Posterior vena cava (tissue), 2 donors: ENCODE measurements at regions of chr9 and their contacts with region 1.

Region 1: DNA sequence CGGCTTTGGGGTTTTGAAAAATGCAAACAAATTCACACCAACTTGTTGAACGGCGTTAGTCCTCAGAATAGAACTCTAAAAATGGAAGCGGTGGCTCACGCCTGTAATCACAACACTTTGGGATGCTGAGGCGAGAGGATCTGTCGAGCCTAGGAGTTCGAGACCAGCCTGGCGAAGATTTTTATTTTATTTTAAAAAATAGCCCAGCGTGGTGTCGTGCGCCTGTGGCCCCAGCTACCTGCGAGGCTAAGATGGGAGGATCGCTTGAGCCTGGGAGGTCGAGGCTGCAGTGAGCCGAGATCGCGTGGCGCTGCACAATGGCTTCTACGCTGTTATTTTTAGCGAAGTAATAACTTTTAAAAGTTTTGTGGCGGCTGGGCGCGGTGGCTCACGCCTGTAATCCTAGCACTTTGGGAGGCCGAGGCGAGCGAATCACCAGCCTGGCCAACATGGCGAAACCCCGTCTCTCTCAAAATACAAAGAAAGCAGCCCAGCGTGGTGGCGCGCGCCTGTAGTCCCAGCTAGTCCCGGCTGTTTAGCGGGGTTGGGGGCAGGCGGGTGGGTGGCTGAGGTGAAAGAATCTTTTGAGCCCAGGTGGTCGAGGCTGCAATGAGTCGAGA is 699 bp upstream of the PLIN2 start:
- DNase-seq: peak; percentile 86

Region 2: GRCh38 chr9:19161257-19162025 is 33.5 kb after region 1 on chr9:
- intact Hi-C with region 1: loop called in 1 of 2 experiments (anchors 5 kb)
- DNase-seq: no peak

Region 3: DNA sequence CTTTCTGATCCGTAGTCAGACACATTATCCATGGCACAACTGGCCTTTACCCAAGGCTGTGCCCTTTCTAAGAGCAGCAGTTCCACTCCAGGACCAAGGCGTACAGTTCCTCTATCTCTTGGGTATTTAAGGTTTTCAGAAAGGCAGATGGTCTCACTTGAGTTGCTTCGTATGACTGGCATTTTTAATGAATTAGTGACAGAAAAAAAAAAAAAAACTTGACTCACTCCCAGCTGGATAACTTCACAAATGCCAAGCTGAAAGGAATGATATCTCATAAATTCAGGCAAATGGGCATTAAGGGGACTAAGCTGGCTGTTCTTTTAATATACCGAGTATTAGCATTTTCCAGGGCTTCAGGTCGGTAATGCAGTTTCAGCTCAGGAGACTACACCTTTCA is 600.1 kb after region 1 on chr9:
- intact Hi-C with region 1: no loop called
- DNase-seq: no peak